ENCODE measurements at regions of chr11 and their contacts with region 1.

Region 1: DNA sequence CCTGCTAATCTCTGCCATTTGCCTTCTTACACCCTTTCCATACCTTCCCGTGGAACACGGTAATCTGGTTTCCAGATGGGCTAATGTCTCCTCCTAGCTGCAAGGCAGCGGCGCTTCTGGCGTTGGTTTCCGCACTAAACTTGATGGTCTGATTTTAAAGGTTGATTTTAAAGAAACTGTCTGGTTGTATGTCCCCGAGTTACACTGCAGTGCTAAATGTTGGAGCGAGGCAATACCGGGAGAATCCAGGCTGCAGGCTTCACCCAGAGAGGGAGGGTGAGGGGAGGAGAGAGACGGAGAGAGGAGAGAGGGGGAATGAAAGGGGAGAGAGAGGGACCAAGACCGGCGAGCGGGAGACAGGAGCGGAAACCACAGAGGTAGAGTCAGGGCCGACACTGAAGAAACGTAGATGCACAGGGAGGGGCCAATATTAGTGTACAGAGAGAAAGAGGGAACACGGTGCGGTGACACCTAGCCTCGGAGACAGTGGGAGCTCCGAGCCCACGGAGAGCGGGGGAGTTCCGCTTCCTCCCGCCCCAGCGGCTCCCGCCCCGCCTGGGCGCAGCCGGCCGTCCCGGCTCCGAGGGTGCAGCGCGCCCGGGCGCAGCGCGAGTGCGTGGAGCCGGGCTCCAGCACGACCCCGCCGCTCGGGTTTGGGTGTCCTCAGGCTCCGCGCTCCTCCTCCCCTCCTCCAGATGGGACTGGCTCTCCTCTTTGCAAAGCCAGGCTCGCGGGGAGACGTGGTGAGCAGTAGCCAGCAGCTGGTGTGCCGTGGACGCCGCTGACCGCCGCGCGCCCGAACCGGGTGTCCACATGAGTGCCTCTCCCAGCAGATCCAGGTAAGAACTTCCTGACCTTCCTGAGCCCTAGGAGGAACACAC is 71.9 kb upstream of the GRAMD1B start:
- DNase-seq: peak; percentile 68
- CTCF ChIP-seq: peak; percentile 38

Region 2: GRCh38 chr11:123235117-123235655 is 123.0 kb before region 1 on chr11:
- CTCF ChIA-PET with region 1: no interaction called
- POLR2A ChIA-PET with region 1: no interaction called
- DNase-seq: no peak
- CTCF ChIP-seq: peak; percentile 8

Region 3: GRCh38 chr11:123373754-123374621 is 15.8 kb after region 1 on chr11:
- CTCF ChIA-PET with region 1: interaction called, 68 read pairs
- POLR2A ChIA-PET with region 1: no interaction called
- DNase-seq: no peak
- CTCF ChIP-seq: no peak

Measured in GM10248 (cell line).